Left ventricle myocardium inferior (tissue), 1 donor: ENCODE measurements at regions of chr20 and their contacts with region 1.

Region 1: GRCh38 chr20:57596998-57597939 is 23.0 kb downstream of the ZBP1 start:
- DNase-seq: peak; percentile 72
- H3K4me3 ChIP-seq: no peak overlapping the region
- H3K27ac ChIP-seq: no peak overlapping the region
- H3K4me1 ChIP-seq: peaks cover 8% of the 10 kb centered on the region
- H3K27me3 ChIP-seq: peaks cover 35% of the 10 kb centered on the region
- CTCF ChIP-seq: peak; percentile 96

Region 2: GRCh38 chr20:56964888-56965287 is 632.4 kb before region 1 on chr20:
- intact Hi-C with region 1: no loop called
- DNase-seq: no peak
- H3K4me3 ChIP-seq: no peak overlapping the region
- H3K27ac ChIP-seq: no peak overlapping the region
- H3K4me1 ChIP-seq: no peaks in the 10 kb centered on the region
- H3K27me3 ChIP-seq: peaks cover 69% of the 10 kb centered on the region
- CTCF ChIP-seq: no peak

Region 3: GRCh38 chr20:57514273-57514751 is 83.0 kb before region 1 on chr20:
- intact Hi-C with region 1: loop called (anchors 2 kb)
- DNase-seq: peak; percentile 45
- H3K4me3 ChIP-seq: no peak overlapping the region
- H3K27ac ChIP-seq: no peak overlapping the region
- H3K4me1 ChIP-seq: no peaks in the 10 kb centered on the region
- H3K27me3 ChIP-seq: peaks cover 30% of the 10 kb centered on the region
- CTCF ChIP-seq: peak; percentile 85

Region 4: GRCh38 chr20:58209652-58210397 is 612.6 kb after region 1 on chr20:
- intact Hi-C with region 1: loop called (anchors 5 kb)
- DNase-seq: peak; percentile 82
- H3K4me3 ChIP-seq: no peak overlapping the region
- H3K27ac ChIP-seq: no peak overlapping the region
- H3K4me1 ChIP-seq: no peaks in the 10 kb centered on the region
- H3K27me3 ChIP-seq: peaks cover 42% of the 10 kb centered on the region
- CTCF ChIP-seq: peak; percentile 100